HepG2 (cell line): ENCODE measurements at regions of chr6 and their contacts with region 1.

Region 1: GRCh38 chr6:26401987-26402658 is at the start of gene BTN3A1:
- DNase-seq: peak; percentile 81
- ATAC-seq: peak; percentile 94
- H3K4me3 ChIP-seq: peak within 1 kb of the TSS; percentile 63 to 78 (median 75)
- H3K27ac ChIP-seq: peak within 1 kb of the TSS; percentile 75
- H3K4me1 ChIP-seq: peaks cover 48% of the 10 kb centered on the region
- H3K27me3 ChIP-seq: no peaks in the 10 kb centered on the region
- CTCF ChIP-seq: no peak
- EP300 ChIP-seq: no peak
- POLR2A ChIP-seq: peak; percentile 49 to 57; a peak in 3 of 4 replicates
- RAD21 ChIP-seq: no peak
- total RNA-seq, gene BTN3A1: 8.1 and 13.3 TPM in 2 replicates

Region 2: GRCh38 chr6:25946631-25947030 is 455.5 kb before region 1 on chr6:
- CTCF ChIA-PET with region 1: no interaction called
- POLR2A ChIA-PET with region 1: no interaction called
- in situ Hi-C with region 1: no loop called
- intact Hi-C with region 1: no loop called
- DNase-seq: no peak
- ATAC-seq: no peak
- H3K4me3 ChIP-seq: no peak overlapping the region
- H3K27ac ChIP-seq: no peak overlapping the region
- H3K4me1 ChIP-seq: peaks cover 25% of the 10 kb centered on the region
- H3K27me3 ChIP-seq: no peaks in the 10 kb centered on the region
- CTCF ChIP-seq: no peak
- EP300 ChIP-seq: no peak
- POLR2A ChIP-seq: no peak
- RAD21 ChIP-seq: no peak

Region 3: DNA sequence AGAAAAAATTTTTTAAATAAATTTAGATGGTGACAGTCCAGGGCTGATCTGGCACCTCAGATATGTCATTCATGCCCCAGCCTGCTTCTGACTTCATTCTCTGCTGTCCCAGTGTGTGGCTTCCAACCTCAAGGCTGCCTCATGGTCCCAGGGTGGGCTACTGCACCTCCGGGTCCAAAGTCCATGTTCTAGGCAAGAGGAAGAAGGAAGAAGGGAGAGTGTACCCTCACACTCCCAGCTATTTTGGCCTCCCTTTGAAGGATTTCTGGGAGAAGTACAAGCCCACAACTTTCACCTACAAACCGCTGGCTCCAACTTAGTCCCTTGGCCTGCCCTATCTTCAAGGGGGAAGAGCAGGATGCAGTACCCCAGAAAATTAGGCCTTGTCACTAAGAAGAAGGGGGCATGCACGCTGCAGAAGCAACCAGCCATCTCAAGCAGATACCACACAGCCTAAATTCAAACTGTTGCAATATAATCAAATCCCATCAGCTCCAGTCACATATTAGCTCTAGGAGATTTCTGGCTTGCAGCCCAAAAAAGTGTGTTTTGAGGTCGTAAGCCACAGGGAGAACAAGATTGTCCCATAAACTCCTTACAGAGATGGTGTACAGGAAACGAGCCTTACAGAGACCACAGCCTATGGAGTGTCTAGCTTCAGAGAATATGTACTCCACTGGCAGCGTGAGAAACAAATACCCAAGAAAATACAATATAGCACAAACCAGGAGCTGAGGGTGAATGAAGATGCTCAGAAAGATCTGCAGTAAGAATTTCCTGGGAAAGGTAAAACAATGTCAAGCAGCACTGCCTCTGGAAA is 38.0 kb before region 1 on chr6:
- CTCF ChIA-PET with region 1: no interaction called
- POLR2A ChIA-PET with region 1: no interaction called
- in situ Hi-C with region 1: no loop called
- intact Hi-C with region 1: loop called (anchors 1 kb)
- DNase-seq: no peak
- ATAC-seq: peak; percentile 31; the same call in 2 of the 3 replicates
- H3K4me3 ChIP-seq: peak overlapping the region; percentile 57 to 78 (median 66)
- H3K27ac ChIP-seq: peak overlapping the region; percentile 73
- H3K4me1 ChIP-seq: peaks cover 56% of the 10 kb centered on the region
- H3K27me3 ChIP-seq: no peaks in the 10 kb centered on the region; a peak in 1 of 5 replicates
- CTCF ChIP-seq: no peak
- EP300 ChIP-seq: no peak
- POLR2A ChIP-seq: no peak
- RAD21 ChIP-seq: no peak

Region 4: DNA sequence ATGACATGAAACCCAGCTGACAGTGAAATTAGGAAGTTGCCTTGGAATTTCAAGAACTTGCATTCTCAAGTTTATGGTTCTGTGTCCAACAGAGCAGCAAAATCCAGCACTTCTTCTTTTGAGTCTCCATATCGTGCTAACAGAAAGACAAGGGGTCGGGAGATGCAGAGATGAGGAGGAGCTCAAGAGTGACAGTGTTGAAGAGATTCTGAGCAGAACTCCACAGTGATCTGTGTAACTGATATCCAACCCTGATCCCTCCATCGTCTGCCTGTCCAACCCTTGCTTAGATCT is 76.8 kb after region 1 on chr6:
- CTCF ChIA-PET with region 1: no interaction called
- POLR2A ChIA-PET with region 1: no interaction called
- in situ Hi-C with region 1: no loop called
- intact Hi-C with region 1: no loop called
- DNase-seq: no peak
- ATAC-seq: no peak
- H3K4me3 ChIP-seq: no peak overlapping the region
- H3K27ac ChIP-seq: no peak overlapping the region
- H3K4me1 ChIP-seq: peaks cover 57% of the 10 kb centered on the region
- H3K27me3 ChIP-seq: no peaks in the 10 kb centered on the region
- CTCF ChIP-seq: no peak
- EP300 ChIP-seq: no peak
- POLR2A ChIP-seq: no peak
- RAD21 ChIP-seq: no peak